Ascending aorta (tissue), 2 donors: ENCODE measurements at regions of chr10 and their contacts with region 1.

Region 1: GRCh38 chr10:115762029-115762428 is 511.0 kb downstream of the GFRA1 start:
- DNase-seq: peak in 1 of 2 donors; percentile 65
- H3K4me3 ChIP-seq: no peak overlapping the region
- H3K27ac ChIP-seq: peak overlapping the region; percentile 44 to 68
- H3K4me1 ChIP-seq: peaks cover 0 to 6% of the 10 kb centered on the region in 2 donors
- H3K27me3 ChIP-seq: no peaks in the 10 kb centered on the region
- CTCF ChIP-seq: no peak

Region 2: GRCh38 chr10:115402690-115403089 is 359.3 kb before region 1 on chr10:
- intact Hi-C with region 1: loop called (anchors 5 kb)
- DNase-seq: no peak
- H3K4me3 ChIP-seq: no peak overlapping the region
- H3K27ac ChIP-seq: no peak overlapping the region
- H3K4me1 ChIP-seq: no peaks in the 10 kb centered on the region
- H3K27me3 ChIP-seq: no peaks in the 10 kb centered on the region
- CTCF ChIP-seq: no peak

Region 3: DNA sequence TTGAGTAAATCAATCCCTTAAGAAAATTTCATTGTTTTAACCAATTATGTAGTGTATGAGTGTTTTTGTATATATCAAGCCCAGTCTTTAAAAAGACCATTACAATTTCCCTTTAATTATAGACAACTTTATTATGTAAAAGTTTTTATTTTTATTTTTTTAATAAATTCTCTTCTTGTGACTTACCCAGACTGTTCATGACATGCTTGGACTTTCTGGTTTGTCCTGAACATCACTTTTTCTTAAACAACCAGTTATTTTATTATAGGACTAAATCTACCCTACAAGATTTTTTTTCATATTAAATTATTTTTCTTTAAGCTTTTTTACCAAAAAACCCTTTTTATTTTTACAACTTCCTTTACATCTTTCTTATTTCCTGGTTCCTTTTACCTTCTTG is 258.5 kb before region 1 on chr10:
- intact Hi-C with region 1: no loop called
- DNase-seq: no peak
- H3K4me3 ChIP-seq: no peak overlapping the region
- H3K27ac ChIP-seq: no peak overlapping the region
- H3K4me1 ChIP-seq: no peaks in the 10 kb centered on the region
- H3K27me3 ChIP-seq: no peaks in the 10 kb centered on the region
- CTCF ChIP-seq: no peak

Region 4: GRCh38 chr10:115772606-115773005 is 10.6 kb after region 1 on chr10:
- intact Hi-C with region 1: loop called (anchors 1 kb)
- DNase-seq: no peak
- H3K4me3 ChIP-seq: no peak overlapping the region
- H3K27ac ChIP-seq: peak overlapping the region; percentile 67 to 75
- H3K4me1 ChIP-seq: peaks cover 3 to 12% of the 10 kb centered on the region in 2 donors
- H3K27me3 ChIP-seq: no peaks in the 10 kb centered on the region
- CTCF ChIP-seq: no peak